GM12878 (cell line): ENCODE measurements at regions of chr10 and their contacts with region 1.

Region 1: DNA sequence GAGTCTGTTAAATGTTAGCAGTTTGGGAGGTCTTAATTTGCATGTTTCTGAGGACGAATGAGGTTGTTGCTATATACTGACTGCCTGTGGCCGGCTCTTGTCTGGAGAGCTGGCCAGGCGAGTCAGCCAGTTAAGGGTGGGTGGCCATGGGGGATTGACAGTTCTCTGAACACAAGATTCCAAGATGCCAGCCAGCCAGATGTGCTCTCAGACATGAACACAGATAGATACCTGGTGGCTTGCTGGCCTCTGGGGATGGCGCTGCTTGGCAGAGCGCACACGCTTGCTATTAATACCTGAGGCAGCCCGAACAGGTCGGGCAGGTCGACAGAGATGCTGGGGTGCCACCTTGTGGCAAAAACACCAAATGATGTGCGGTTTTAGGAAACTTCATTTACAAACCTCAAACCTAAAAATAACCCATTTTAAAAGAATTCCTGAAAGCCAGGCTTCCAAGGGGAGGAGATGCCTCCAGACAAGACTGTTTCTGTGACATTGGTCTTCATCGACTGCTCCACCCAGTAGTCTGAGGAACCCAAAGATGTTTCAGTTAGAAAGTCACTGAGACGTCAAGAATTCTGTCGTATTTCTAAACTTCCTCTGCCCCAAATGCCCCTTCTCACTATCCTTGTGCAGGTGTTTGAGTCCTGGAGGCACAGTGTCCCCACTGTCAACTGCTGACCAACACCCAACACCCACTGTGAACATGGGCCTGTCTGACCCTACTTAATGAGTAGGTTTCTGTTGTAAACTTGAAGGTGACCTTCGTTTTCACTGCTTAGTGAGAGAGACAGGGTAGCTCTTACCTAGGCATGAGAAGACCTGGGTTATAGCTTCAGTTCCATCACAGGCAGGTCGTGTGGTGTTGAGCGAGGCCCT is 123.4 kb downstream of the NT5C2 start:
- DNase-seq: peak; percentile 46
- ATAC-seq: peak; percentile 87
- H3K4me3 ChIP-seq: 0 out of 2 replicates have a peak overlapping the region, but pooled peaks have one; percentile 2
- H3K27ac ChIP-seq: peak overlapping the region; percentile 73
- H3K4me1 ChIP-seq: peaks cover 37% of the 10 kb centered on the region
- H3K27me3 ChIP-seq: no peaks in the 10 kb centered on the region
- CTCF ChIP-seq: peak; percentile 69 to 82 (median 70)
- EP300 ChIP-seq: no peak
- POLR2A ChIP-seq: no peak
- RAD21 ChIP-seq: peak; percentile 88

Region 2: DNA sequence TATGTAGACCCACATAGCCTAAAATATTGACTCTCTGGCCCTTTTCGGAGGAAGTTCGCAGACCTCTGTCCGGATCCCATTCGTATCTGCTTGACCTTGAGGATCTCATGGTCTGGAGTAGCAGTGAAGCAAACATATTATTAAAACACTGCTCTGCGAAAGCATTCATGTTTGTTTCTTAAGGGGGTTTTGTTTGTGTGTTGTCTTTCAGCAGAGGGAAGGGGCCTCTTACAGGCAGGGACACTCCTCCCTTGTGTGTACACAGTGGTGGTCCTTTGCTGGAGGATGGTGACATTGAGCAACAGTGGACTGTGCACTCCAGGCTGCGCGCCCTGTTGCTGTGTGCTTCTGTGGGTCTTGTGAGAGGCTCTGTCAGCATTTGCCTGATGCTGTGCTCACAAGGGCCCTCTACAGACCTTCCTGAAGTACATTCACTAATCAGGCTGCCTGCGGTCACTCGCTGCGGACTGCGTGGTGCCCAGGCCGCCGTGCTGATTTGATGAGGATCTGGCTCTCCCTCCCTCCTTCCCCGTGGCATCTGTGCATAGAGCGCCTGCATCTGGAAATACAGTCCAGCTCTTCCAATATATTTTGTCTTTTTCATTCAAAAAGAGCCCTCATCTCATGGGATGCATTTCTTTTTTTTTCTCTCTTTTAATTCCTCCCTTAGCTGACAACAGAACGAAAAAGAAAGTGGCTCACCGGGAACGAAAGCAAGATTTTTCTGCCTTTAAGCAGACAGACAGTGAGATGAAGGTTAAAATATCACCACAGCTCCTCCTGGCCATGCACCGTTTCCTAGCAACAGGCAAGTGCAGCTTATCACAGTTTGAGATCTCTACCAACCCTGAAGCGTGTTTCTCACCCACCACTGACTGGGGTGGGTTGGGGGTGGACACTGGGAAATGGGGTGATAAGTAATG is 15.8 kb before region 1 on chr10:
- CTCF ChIA-PET with region 1: interaction called, 27 read pairs
- POLR2A ChIA-PET with region 1: interaction called, 5 read pairs
- RAD21 ChIA-PET with region 1: interaction called, 7 read pairs
- SMC1A ChIA-PET with region 1: interaction called, 11 read pairs
- in situ Hi-C with region 1: no loop called
- intact Hi-C with region 1: loop called (anchors 1 kb)
- DNase-seq: peak; percentile 55
- ATAC-seq: peak; percentile 99
- H3K4me3 ChIP-seq: peak overlapping the region; percentile 49; the same call in 1 of the 2 replicates
- H3K27ac ChIP-seq: no peak overlapping the region; the same call in 1 of the 2 replicates
- H3K4me1 ChIP-seq: no peaks in the 10 kb centered on the region
- H3K27me3 ChIP-seq: no peaks in the 10 kb centered on the region
- CTCF ChIP-seq: peak; percentile 39 to 68 (median 54); a peak in 4 of 6 replicates
- EP300 ChIP-seq: no peak; a peak in 1 of 4 replicates
- POLR2A ChIP-seq: no peak
- RAD21 ChIP-seq: no peak

Region 3: GRCh38 chr10:103153302-103154197 is 83.9 kb after region 1 on chr10:
- CTCF ChIA-PET with region 1: no interaction called
- POLR2A ChIA-PET with region 1: no interaction called
- RAD21 ChIA-PET with region 1: no interaction called
- SMC1A ChIA-PET with region 1: no interaction called
- in situ Hi-C with region 1: no loop called
- intact Hi-C with region 1: no loop called
- DNase-seq: no peak
- ATAC-seq: no peak
- H3K4me3 ChIP-seq: no peak overlapping the region
- H3K27ac ChIP-seq: no peak overlapping the region
- H3K4me1 ChIP-seq: no peaks in the 10 kb centered on the region
- H3K27me3 ChIP-seq: no peaks in the 10 kb centered on the region
- CTCF ChIP-seq: no peak
- EP300 ChIP-seq: no peak
- POLR2A ChIP-seq: no peak
- RAD21 ChIP-seq: no peak

Region 4: DNA sequence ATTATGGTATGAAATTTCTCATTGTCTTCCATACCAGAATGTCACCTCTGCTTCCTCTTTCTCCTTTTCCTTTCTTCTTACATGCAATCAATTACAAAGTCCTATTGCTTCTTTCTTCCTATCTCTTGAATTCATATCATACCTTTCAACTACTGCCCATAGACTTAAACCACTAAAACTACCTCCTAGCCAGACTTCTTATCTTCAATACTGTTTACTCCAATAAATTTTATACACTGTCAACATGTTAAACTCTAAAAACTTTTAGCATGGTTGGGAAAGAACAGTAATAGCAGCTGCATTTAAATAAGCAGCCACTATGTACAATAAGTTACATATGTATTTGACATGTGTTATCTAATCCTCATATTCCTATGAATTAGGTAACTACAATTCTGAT is 246.4 kb after region 1 on chr10:
- CTCF ChIA-PET with region 1: no interaction called
- POLR2A ChIA-PET with region 1: no interaction called
- RAD21 ChIA-PET with region 1: no interaction called
- SMC1A ChIA-PET with region 1: no interaction called
- in situ Hi-C with region 1: no loop called
- intact Hi-C with region 1: no loop called
- DNase-seq: no peak
- ATAC-seq: no peak
- H3K4me3 ChIP-seq: no peak overlapping the region
- H3K27ac ChIP-seq: no peak overlapping the region
- H3K4me1 ChIP-seq: no peaks in the 10 kb centered on the region
- H3K27me3 ChIP-seq: no peaks in the 10 kb centered on the region
- CTCF ChIP-seq: no peak
- EP300 ChIP-seq: no peak
- POLR2A ChIP-seq: no peak
- RAD21 ChIP-seq: no peak

Region 5: DNA sequence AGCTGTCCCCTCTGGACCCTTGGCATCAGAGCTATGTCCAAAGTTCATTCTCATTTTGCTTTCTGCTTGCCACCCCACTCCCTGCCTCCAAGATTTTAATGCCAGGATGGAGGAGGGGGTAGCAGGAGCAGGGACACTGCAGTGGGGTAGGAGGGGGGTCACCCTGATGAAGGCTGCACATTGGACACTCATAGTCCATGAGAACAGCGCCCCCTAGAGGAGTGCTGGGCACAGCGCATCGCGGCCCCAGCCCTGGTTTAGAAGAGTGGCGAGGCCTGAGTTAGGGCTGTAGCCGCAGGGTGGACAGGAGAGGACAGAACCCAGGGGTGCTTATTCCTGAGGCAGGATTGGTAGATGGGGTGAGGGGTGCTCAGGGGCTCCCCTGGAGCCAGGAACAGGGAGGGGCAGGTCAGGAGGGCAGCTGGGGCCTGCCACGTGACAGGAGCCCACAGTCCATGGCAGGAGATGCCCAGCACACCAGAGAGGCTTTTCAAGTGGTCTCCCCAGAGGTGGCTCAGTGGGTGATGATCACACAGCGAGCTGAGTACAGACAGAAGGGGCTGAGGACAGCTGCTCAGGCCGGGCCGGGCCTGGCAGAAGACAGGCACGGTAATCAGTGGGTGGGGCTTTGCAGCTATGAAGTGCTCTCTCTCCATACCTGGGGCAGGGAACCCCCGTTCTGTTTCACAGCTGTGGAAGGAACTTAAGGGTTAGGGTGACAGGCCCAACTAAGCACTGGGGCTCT is 495.3 kb after region 1 on chr10:
- CTCF ChIA-PET with region 1: no interaction called
- POLR2A ChIA-PET with region 1: no interaction called
- RAD21 ChIA-PET with region 1: no interaction called
- SMC1A ChIA-PET with region 1: no interaction called
- in situ Hi-C with region 1: no loop called
- intact Hi-C with region 1: no loop called
- DNase-seq: no peak
- ATAC-seq: peak; percentile 81
- H3K4me3 ChIP-seq: no peak overlapping the region
- H3K27ac ChIP-seq: no peak overlapping the region
- H3K4me1 ChIP-seq: no peaks in the 10 kb centered on the region
- H3K27me3 ChIP-seq: no peaks in the 10 kb centered on the region
- CTCF ChIP-seq: peak; percentile 44 to 78 (median 75)
- EP300 ChIP-seq: no peak
- POLR2A ChIP-seq: no peak
- RAD21 ChIP-seq: peak; percentile 44